ENCODE measurements at regions of chr20 and their contacts with region 1.

Region 1: DNA sequence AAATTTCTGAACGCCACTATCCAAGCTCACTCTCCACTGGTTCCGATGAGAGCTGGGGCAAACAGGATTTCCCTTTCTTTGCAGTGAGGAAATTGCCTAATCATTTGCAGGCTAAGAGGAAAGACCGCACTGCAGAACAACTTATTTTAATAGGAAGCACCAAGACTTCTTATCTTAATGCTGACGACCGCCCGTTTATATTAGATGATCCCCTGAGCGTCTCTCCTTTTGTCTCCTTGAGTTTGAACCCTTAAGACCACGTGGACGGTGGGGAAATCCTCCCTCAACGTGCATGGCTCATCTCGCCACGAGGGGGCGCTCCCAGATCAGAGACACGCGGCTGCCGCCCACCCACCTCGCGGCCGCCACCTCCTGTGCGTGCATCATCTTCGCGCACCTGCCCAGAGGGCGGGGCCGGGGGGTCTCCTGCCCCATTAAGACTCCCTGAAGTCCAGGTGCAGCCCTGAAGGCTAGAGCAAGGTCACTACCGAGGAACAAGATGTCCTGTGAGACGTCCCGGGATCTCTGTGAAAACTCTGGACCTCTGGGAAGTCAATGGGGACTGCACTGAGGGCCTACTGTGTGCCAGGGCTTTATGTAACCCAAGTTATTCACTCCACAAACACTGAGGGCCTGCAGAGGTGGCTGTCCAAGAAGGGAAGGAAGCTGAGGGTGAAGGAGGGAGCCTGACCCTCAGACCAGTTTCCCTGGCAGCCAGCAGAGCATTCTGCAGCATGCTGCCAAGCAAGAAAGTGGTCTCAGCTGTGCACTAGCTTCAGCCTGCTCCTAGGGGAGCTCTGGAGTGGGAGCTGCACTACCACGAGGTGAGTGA is 28.1 kb downstream of the PDYN start:
- DNase-seq: peak; percentile 77
- H3K4me3 Mint-ChIP-seq: peak overlapping the region; percentile 16
- H3K27ac Mint-ChIP-seq: no peak overlapping the region
- H3K4me1 Mint-ChIP-seq: no peaks in the 10 kb centered on the region
- H3K27me3 Mint-ChIP-seq: peaks cover 57% of the 10 kb centered on the region
- CTCF ChIP-seq: peak; percentile 72

Region 2: GRCh38 chr20:1764136-1765033 is 201.4 kb before region 1 on chr20:
- CTCF ChIA-PET with region 1: no interaction called
- intact Hi-C with region 1: loop called (anchors 2 kb)
- DNase-seq: peak; percentile 72
- H3K4me3 Mint-ChIP-seq: no peak overlapping the region
- H3K27ac Mint-ChIP-seq: no peak overlapping the region
- H3K4me1 Mint-ChIP-seq: peaks cover 15% of the 10 kb centered on the region
- H3K27me3 Mint-ChIP-seq: no peaks in the 10 kb centered on the region
- CTCF ChIP-seq: peak; percentile 65

Measured in Calu3 (cell line).